ENCODE measurements at regions of chr20 and their contacts with region 1.

Region 1: DNA sequence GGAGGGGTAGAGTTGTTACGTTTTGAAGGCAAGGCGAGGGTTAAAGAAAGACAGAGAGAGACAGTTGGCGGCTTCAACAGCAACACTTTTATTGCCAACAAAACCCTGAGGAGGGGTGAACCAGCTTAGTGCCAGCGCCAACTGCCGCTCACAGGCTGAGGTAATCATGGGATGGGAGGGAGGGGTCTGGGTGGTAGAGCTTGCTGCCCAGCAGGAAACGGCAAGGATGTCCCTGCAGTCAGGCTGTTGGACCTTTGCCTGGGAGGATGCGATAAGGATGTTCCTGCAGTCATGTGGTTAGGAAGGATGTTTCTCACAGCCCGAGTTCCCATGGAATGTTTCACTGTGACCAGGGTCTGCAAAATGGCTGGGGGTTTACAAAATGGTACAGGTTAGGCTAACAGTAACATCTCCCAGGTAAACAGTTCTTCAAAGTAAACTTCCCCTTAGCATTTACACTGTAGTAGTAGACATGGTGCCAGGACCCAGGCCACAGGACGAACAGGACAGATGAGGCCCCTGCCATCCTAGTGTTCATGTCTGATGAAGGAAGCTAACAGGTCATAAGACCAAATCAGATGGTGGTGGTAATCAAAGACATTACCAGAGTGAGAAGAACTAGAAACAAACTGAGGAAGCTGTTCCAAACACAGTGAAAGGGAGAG is 647.3 kb upstream of the DEFB115 start:
- DNase-seq: no peak
- ATAC-seq: no peak
- H3K4me3 Mint-ChIP-seq: no peak overlapping the region
- H3K27ac Mint-ChIP-seq: no peak overlapping the region
- H3K4me1 Mint-ChIP-seq: no peaks in the 10 kb centered on the region
- H3K27me3 Mint-ChIP-seq: no peaks in the 10 kb centered on the region
- CTCF ChIP-seq: no peak

Region 2: DNA sequence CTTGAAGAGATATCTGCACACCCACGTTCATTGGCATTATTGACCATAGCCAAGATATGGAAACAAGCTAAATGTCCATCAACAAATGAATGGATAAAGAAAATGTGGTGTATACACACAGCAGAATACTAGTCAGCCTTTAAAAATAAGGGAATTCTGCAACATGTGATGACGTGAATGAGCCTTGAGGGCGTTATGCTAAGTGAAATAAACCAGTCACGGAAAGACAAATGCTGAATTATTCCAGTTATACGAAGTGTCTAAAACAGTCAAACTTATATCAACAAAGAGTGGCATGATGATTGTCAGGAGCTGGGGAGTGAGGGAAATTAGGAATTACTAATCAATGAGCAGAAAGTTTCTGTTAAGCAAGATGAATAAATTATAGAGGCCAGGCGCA is 804.2 kb after region 1 on chr20:
- CTCF ChIA-PET with region 1: no interaction called
- POLR2A ChIA-PET with region 1: interaction called, 12 read pairs
- intact Hi-C with region 1: no loop called
- DNase-seq: no peak
- ATAC-seq: no peak
- H3K4me3 Mint-ChIP-seq: no peak overlapping the region
- H3K27ac Mint-ChIP-seq: no peak overlapping the region
- H3K4me1 Mint-ChIP-seq: no peaks in the 10 kb centered on the region
- H3K27me3 Mint-ChIP-seq: peaks cover 3% of the 10 kb centered on the region
- CTCF ChIP-seq: no peak

Region 3: DNA sequence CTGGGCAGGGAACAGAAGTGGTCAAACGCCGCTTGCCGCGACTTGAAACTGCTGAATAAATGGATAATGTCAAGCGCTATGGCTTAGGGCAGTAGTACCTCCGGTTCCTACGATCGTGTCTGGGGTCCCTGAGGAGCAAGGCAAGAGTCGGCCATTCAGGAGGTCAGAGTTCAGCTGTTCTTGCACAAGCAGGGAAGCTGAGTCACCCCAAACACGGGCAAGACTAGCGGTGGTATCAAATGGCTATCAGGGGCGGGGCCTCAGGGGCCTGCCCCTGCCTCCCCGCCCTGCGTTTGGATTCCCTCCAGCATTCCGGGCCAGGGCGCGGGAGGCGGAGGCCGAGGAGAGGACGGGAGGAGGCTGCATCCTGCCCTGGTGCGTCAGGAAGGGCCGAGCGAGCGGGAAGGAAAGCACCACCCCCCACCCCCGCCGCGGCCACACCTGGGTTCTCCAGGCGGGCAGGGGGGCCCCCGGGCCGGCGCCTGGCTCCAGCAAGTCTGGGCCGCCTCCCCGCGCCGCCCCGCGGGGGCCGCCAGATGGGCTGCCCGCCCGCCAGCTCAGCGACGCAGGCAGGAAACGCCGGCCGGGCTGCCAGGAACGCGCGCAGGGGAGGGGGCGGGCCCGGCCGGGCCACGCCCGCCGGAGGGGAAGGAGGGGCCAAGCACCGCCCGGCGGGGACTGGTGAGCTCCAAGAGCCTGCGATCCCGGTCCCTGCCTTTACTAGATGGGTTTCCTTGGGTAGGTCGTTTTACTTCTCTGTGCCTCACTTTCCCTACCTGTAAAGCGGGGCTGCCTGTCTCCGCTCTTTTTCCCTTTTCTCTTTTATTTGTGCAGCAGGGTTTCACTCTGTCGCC is 962.8 kb after region 1 on chr20:
- CTCF ChIA-PET with region 1: no interaction called
- POLR2A ChIA-PET with region 1: no interaction called
- intact Hi-C with region 1: no loop called
- DNase-seq: peak; percentile 75
- ATAC-seq: peak; percentile 91
- H3K4me3 Mint-ChIP-seq: peak overlapping the region; percentile 88
- H3K27ac Mint-ChIP-seq: peak overlapping the region; percentile 79
- H3K4me1 Mint-ChIP-seq: peaks cover 18% of the 10 kb centered on the region
- H3K27me3 Mint-ChIP-seq: no peaks in the 10 kb centered on the region
- CTCF ChIP-seq: no peak